ENCODE measurements at regions of chr1 and their contacts with region 1.

Region 1: DNA sequence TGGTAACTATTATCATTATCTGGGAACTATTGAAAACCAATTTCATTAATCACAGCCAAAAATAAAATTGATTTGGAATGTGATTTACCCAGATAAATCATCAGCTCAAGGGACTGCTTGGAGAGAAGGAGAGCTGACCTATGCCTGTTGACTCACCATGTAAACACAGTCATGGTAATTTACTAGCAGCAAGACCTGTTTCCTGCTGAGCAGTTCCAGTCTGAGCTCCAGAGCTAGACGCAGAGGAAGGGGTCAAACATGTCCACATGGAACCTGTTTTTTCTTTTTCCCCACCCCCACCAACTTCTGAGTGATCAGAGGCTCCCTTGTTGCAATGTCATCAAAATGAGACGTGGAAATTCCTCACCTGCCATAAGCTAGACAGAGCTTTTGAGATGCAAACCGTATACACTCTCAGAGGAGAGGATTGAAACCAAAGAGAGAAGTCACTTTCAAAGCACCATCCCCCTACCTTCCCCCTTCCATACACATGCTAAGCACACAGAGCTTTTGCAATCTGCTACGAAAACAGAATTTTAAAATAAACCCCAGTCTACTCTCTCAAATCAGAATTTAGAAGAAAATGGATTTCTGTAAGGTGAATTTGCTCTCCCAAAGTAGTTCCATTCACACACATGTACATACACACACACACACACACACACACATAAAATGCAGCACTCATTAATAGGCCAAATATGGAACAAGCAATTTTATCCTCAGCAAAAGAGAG is 55.9 kb upstream of the PTGFRN start:
- DNase-seq: peak; percentile 83
- H3K4me3 ChIP-seq: no peak overlapping the region
- H3K27ac ChIP-seq: no peak overlapping the region
- H3K4me1 ChIP-seq: peaks cover 31% of the 10 kb centered on the region
- H3K27me3 ChIP-seq: no peaks in the 10 kb centered on the region
- CTCF ChIP-seq: no peak

Region 2: DNA sequence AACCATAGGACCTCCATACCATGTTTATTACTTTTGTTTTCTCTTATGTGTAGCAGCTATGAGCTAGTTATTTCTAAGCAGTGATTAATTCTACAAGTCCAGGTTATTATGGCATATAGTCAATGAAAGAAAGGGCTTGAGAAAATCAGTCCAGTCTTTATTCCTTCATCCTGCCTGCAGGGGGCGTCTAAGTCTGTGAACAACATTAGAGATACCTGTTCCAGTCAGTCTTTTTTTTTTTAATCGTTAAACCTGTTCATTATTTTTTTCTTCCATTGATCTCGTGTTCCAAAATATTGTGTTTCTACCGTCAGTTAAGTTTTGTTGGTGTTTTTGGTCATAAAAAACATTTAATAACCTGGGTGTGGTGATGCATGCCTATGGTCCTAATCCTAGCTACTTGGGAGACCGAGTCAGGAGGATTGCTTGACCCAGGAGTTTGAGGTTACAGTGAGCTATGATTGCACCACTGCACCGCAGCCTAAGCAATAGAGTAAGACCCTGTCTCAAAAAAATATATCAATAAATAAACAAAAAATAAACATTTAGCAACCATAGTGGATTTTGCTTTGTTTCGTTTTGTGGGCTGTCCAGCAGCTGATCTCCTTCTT is 129.0 kb before region 1 on chr1:
- CTCF ChIA-PET with region 1: no interaction called
- dilution Hi-C with region 1: no loop called
- in situ Hi-C with region 1: no loop called
- intact Hi-C with region 1: no loop called
- DNase-seq: peak; percentile 52
- H3K4me3 ChIP-seq: no peak overlapping the region
- H3K27ac ChIP-seq: no peak overlapping the region
- H3K4me1 ChIP-seq: peaks cover 39% of the 10 kb centered on the region
- H3K27me3 ChIP-seq: no peaks in the 10 kb centered on the region
- CTCF ChIP-seq: peak; percentile 68 to 89

Region 3: DNA sequence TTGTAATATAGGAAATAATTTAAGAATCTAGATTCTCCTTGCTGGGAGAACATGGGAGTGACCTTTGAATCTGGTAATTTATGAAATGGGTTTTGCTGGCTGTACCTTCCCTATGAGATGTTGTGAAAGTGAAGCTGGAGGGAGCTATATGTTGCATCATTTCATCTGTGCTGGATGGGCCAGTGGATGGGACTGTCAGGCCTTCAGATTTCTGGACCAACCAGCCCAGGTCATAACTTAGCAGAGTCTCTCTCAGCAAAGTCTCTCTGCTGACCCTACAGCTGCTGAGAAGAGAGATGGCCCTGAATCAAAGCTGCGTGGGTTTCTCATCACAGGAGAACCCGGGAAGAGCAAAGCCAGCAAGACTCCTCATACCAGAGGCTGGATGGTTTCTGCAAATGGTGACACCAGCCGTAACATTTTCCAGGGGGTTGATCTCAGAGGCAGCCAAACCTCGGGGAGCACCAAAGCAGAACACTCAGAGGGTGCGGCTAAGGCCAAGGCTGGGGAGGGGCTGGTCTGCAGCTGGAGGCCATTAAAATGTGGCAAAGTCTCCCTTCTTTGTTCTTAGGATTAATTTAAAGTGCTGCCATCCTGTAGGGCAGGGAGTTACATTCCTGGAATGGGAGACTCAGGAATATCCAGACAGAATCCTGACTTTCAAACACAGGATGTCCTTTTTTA is 37.7 kb after region 1 on chr1:
- CTCF ChIA-PET with region 1: no interaction called
- dilution Hi-C with region 1: no loop called
- in situ Hi-C with region 1: no loop called
- intact Hi-C with region 1: no loop called
- DNase-seq: no peak
- H3K4me3 ChIP-seq: no peak overlapping the region
- H3K27ac ChIP-seq: no peak overlapping the region
- H3K4me1 ChIP-seq: peaks cover 7% of the 10 kb centered on the region
- H3K27me3 ChIP-seq: no peaks in the 10 kb centered on the region
- CTCF ChIP-seq: no peak

Region 4: DNA sequence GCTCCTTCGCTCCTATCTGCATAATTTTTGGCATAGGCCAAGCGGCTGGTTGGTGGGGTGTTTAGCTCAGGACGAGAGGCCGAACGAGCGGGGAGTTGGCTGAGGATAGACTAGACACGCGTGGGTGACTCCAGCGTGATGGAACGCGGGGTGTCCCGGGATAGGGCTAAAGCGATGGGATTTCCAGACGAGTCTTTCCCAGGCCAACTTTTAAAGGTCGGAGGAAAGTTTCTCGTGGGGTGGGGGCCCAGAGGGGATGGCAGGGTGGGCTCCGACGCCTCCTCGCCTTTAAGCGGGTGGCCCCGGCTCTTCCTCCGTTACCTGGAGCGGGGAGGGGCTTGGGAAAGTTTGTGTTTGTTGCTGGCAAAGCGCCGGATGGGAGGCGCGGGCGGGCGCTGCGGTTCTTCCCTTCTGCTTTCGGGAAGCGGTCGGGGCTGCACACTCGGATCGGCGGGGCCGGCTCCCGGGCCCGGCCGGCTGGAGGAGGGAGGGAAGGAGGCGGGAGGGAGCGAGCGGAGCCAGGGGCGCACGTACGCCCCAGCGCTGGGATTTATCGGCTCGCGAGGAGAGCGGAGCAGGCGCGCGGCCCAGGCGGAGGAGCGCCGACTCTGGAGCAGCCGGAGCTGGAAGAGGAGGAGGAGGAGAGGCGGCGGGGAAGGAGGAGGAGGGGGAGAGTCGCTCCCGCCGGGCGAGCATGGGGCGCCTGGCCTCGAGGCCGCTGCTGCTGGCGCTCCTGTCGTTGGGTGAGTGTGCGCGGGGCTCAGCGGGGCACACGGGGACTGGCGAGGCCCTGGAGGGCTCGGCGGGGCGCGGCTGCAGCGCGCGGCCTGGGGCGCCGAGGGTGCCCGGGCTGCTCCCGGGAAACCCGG is 55.9 kb after region 1 on chr1 and contains the start of gene PTGFRN:
- CTCF ChIA-PET with region 1: no interaction called
- dilution Hi-C with region 1: no loop called
- in situ Hi-C with region 1: no loop called
- intact Hi-C with region 1: loop called (anchors 10 kb)
- DNase-seq: peak; percentile 81
- H3K4me3 ChIP-seq: peak within 1 kb of the TSS; percentile 63 to 82 (median 80)
- H3K27ac ChIP-seq: peak within 1 kb of the TSS; percentile 80
- H3K4me1 ChIP-seq: peaks cover 62% of the 10 kb centered on the region
- H3K27me3 ChIP-seq: no peaks in the 10 kb centered on the region
- CTCF ChIP-seq: no peak
- total RNA-seq, gene PTGFRN: 143 to 150 TPM

Region 5: GRCh38 chr1:117121776-117122697 is 268.2 kb after region 1 on chr1:
- CTCF ChIA-PET with region 1: no interaction called
- dilution Hi-C with region 1: no loop called
- in situ Hi-C with region 1: no loop called
- intact Hi-C with region 1: loop called (anchors 10 kb)
- DNase-seq: peak; percentile 97
- H3K4me3 ChIP-seq: peak overlapping the region; percentile 62 to 82 (median 66)
- H3K27ac ChIP-seq: peak overlapping the region; percentile 70
- H3K4me1 ChIP-seq: peaks cover 8% of the 10 kb centered on the region
- H3K27me3 ChIP-seq: no peaks in the 10 kb centered on the region
- CTCF ChIP-seq: peak; percentile 40 to 80

Measured in mammary epithelial cell (primary cell).